ENCODE measurements at regions of chr15 and their contacts with region 1.

Region 1: DNA sequence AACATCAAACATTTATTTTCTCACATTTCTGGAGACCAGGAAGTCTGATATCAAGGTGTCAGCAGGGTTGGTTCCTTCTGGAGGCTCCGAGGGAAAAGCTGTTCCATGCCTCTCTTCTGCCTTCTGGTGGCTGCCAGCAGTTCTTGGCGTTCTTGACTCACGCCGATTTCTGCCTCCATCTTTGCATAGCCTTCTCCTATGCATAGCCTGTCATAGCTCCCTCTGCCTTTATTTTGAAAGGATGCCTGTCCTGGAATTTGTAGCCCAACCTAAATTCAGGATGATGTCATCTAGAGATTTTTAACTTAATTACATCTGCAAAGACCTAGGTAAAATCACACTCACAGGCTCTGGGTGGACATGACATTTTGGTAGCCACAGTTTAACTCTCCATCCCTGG is 70.4 kb downstream of the RGMA start:
- DNase-seq: no peak
- ATAC-seq: no peak
- H3K4me3 ChIP-seq: no peak overlapping the region
- H3K4me3 Mint-ChIP-seq: no peak overlapping the region
- H3K27ac ChIP-seq: no peak overlapping the region
- H3K27ac Mint-ChIP-seq: peak overlapping the region in 8 of 9 donors; percentile 28 to 93 (median 76)
- H3K4me1 ChIP-seq: peaks cover 0 to 5% of the 10 kb centered on the region in 2 donors
- H3K4me1 Mint-ChIP-seq: peaks cover 14 to 71% (median 66%) of the 10 kb centered on the region in 7 donors
- H3K27me3 ChIP-seq: no peaks in the 10 kb centered on the region
- H3K27me3 Mint-ChIP-seq: no peaks in the 10 kb centered on the region

Region 2: DNA sequence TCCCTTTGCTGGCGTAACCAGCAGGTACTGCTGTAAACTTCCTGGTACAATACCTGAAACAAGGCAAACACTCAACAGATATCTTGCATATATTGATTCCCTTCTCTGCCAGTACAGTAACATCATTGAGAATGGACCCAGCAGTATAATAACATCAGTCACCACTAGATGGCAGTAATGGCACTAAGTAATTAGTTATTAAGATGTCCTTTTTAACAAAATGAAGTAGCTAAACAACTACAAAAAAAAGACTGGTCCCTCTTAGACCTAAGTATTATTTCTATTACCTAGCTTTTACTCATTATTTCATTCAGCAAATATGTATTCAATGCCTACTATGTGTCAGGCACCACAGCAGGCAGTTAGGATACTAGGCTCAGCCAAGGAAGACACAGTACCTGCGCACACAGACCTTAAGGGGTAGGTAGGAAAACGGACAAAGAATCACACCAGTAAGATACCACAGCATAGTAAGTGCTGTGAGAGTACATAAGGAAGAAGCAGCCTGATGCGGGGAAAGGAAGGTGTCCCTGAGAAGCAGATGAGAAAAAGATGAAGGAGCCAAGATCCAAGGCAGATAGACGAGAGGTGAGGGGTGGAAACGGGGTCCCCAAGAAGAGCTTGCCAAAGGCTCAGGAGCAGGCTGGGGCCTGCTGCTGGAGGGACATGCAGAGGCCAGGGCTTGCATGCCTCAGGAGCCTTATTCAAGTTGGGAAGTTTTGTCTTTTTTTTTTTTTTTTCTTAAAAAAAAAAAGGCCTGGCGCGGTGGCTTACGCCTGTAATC is 221.2 kb before region 1 on chr15:
- CTCF ChIA-PET with region 1: interaction called, 3 read pairs
- POLR2A ChIA-PET with region 1: interaction called, 3 read pairs
- intact Hi-C with region 1: loop called (anchors 5 kb)
- DNase-seq: peak in 7 of 9 donors; percentile 61 to 81 (median 74)
- ATAC-seq: peak; percentile 95
- H3K4me3 ChIP-seq: no peak overlapping the region
- H3K4me3 Mint-ChIP-seq: peak overlapping the region in 1 of 10 donors; percentile 12
- H3K27ac ChIP-seq: no peak overlapping the region
- H3K27ac Mint-ChIP-seq: peak overlapping the region; percentile 72 to 95 (median 79)
- H3K4me1 ChIP-seq: peaks cover 3 to 4% of the 10 kb centered on the region in 2 donors
- H3K4me1 Mint-ChIP-seq: peaks cover 6 to 23% (median 12%) of the 10 kb centered on the region in 7 donors
- H3K27me3 ChIP-seq: no peaks in the 10 kb centered on the region
- H3K27me3 Mint-ChIP-seq: no peaks in the 10 kb centered on the region

Region 3: GRCh38 chr15:92831655-92832328 is 186.8 kb before region 1 on chr15:
- CTCF ChIA-PET with region 1: no interaction called
- POLR2A ChIA-PET with region 1: no interaction called
- intact Hi-C with region 1: no loop called
- DNase-seq: peak; percentile 53 to 98 (median 86)
- ATAC-seq: peak; percentile 94
- H3K4me3 ChIP-seq: peak overlapping the region; percentile 21
- H3K4me3 Mint-ChIP-seq: peak overlapping the region; percentile 74 to 91 (median 81)
- H3K27ac ChIP-seq: peak overlapping the region; percentile 81
- H3K27ac Mint-ChIP-seq: peak overlapping the region; percentile 92 to 98 (median 97)
- H3K4me1 ChIP-seq: peaks cover 31 to 53% of the 10 kb centered on the region in 2 donors
- H3K4me1 Mint-ChIP-seq: peaks cover 26 to 61% (median 50%) of the 10 kb centered on the region in 7 donors
- H3K27me3 ChIP-seq: no peaks in the 10 kb centered on the region
- H3K27me3 Mint-ChIP-seq: no peaks in the 10 kb centered on the region

Region 4: GRCh38 chr15:92979011-92979701 is 39.4 kb before region 1 on chr15:
- CTCF ChIA-PET with region 1: no interaction called
- POLR2A ChIA-PET with region 1: no interaction called
- intact Hi-C with region 1: loop called (anchors 5 kb)
- DNase-seq: no peak
- ATAC-seq: no peak
- H3K4me3 ChIP-seq: no peak overlapping the region
- H3K4me3 Mint-ChIP-seq: peak overlapping the region in 1 of 10 donors; percentile 51
- H3K27ac ChIP-seq: no peak overlapping the region
- H3K27ac Mint-ChIP-seq: peak overlapping the region in 7 of 9 donors; percentile 38 to 58 (median 54)
- H3K4me1 ChIP-seq: no peaks in the 10 kb centered on the region
- H3K4me1 Mint-ChIP-seq: peaks cover 11 to 35% (median 14%) of the 10 kb centered on the region in 7 donors
- H3K27me3 ChIP-seq: no peaks in the 10 kb centered on the region
- H3K27me3 Mint-ChIP-seq: no peaks in the 10 kb centered on the region

Region 5: GRCh38 chr15:93088200-93088980 is 69.8 kb after region 1 on chr15:
- CTCF ChIA-PET with region 1: no interaction called
- POLR2A ChIA-PET with region 1: no interaction called
- intact Hi-C with region 1: no loop called
- DNase-seq: peak in 5 of 9 donors; percentile 3 to 38 (median 16)
- ATAC-seq: peak; percentile 47
- H3K4me3 ChIP-seq: peak overlapping the region; percentile 33
- H3K4me3 Mint-ChIP-seq: peak overlapping the region; percentile 75 to 94 (median 87)
- H3K27ac ChIP-seq: no peak overlapping the region
- H3K27ac Mint-ChIP-seq: no peak overlapping the region
- H3K4me1 ChIP-seq: peaks cover 0 to 4% of the 10 kb centered on the region in 2 donors
- H3K4me1 Mint-ChIP-seq: peaks cover 10 to 26% (median 16%) of the 10 kb centered on the region in 7 donors
- H3K27me3 ChIP-seq: peaks cover 15 to 22% of the 10 kb centered on the region in 2 donors
- H3K27me3 Mint-ChIP-seq: peaks cover 58 to 71% (median 65%) of the 10 kb centered on the region in 5 donors

Region 6: DNA sequence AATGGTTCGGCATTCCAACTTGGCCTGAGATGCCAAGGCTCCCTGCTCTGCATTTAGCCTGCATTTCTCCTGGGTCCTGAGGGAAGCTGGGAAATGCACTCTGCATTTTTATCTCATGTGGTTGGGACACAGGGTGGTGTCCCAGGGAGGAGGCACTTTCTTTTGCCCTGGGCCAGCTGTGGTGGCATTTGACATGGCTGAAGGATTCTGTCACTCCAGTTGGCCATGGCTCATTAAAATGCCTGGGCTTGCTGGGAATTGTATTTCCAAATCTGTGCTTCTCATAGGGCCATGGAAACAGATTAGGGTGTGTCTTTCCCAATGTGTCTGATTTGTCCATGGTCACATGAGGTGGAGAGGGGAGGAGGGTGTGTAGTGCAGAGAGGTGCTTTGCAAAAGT is 198.8 kb after region 1 on chr15:
- CTCF ChIA-PET with region 1: no interaction called
- POLR2A ChIA-PET with region 1: no interaction called
- intact Hi-C with region 1: no loop called
- DNase-seq: no peak
- ATAC-seq: no peak
- H3K4me3 ChIP-seq: no peak overlapping the region
- H3K4me3 Mint-ChIP-seq: no peak overlapping the region
- H3K27ac ChIP-seq: no peak overlapping the region
- H3K27ac Mint-ChIP-seq: no peak overlapping the region
- H3K4me1 ChIP-seq: no peaks in the 10 kb centered on the region
- H3K4me1 Mint-ChIP-seq: peaks cover 0 to 5% (median 0%) of the 10 kb centered on the region in 7 donors
- H3K27me3 ChIP-seq: no peaks in the 10 kb centered on the region
- H3K27me3 Mint-ChIP-seq: peaks cover 0 to 26% (median 14%) of the 10 kb centered on the region in 5 donors